ENCODE measurements at regions of chr9 and their contacts with region 1.

Region 1: GRCh38 chr9:117046666-117047327 is 359.7 kb downstream of the TRIM32 start:
- DNase-seq: no peak
- H3K4me3 ChIP-seq: no peak overlapping the region
- H3K27ac ChIP-seq: no peak overlapping the region
- H3K4me1 ChIP-seq: peaks cover 2 to 6% (median 4%) of the 10 kb centered on the region in 4 experiments; a peak in 4 of 7 replicates
- H3K27me3 ChIP-seq: no peaks in the 10 kb centered on the region
- CTCF ChIP-seq: peak in 2 of 3 experiments; percentile 21 to 49; a peak in 2 of 4 replicates
- EP300 ChIP-seq: no peak
- POLR2A ChIP-seq: no peak
- RAD21 ChIP-seq: peak; percentile 68 to 71

Region 2: GRCh38 chr9:116998305-116998704 is 48.5 kb before region 1 on chr9:
- CTCF ChIA-PET with region 1: no interaction called
- POLR2A ChIA-PET with region 1: no interaction called
- DNase-seq: no peak
- H3K4me3 ChIP-seq: no peak overlapping the region
- H3K27ac ChIP-seq: no peak overlapping the region
- H3K4me1 ChIP-seq: no peaks in the 10 kb centered on the region
- H3K27me3 ChIP-seq: no peaks in the 10 kb centered on the region
- CTCF ChIP-seq: no peak
- EP300 ChIP-seq: no peak
- POLR2A ChIP-seq: no peak
- RAD21 ChIP-seq: no peak

Region 3: DNA sequence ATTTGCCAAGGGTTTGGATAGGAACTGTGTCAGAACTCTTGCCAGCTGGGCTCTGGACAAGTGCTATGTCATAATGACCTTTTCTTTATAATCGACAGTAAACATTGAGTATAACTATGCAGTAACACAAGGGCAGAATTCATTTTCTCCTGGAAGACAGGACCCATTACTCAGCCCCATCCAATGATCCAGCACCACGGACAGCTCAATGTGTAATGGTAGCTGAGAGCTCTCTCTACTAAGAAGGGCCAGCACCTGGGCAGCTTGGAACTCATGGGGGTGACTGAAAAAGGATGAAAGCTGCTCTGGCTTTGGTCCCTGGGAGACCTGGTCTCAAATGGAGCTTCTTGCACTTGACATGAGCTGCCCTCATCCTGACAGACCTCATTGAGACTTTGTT is 11.9 kb before region 1 on chr9:
- CTCF ChIA-PET with region 1: interaction called, 11 read pairs
- POLR2A ChIA-PET with region 1: no interaction called
- DNase-seq: peak in 1 of 2 experiments; percentile 74
- H3K4me3 ChIP-seq: no peak overlapping the region
- H3K27ac ChIP-seq: no peak overlapping the region
- H3K4me1 ChIP-seq: no peaks in the 10 kb centered on the region
- H3K27me3 ChIP-seq: no peaks in the 10 kb centered on the region
- CTCF ChIP-seq: no peak
- EP300 ChIP-seq: no peak
- POLR2A ChIP-seq: no peak
- RAD21 ChIP-seq: no peak; a peak in 1 of 4 replicates

Region 4: DNA sequence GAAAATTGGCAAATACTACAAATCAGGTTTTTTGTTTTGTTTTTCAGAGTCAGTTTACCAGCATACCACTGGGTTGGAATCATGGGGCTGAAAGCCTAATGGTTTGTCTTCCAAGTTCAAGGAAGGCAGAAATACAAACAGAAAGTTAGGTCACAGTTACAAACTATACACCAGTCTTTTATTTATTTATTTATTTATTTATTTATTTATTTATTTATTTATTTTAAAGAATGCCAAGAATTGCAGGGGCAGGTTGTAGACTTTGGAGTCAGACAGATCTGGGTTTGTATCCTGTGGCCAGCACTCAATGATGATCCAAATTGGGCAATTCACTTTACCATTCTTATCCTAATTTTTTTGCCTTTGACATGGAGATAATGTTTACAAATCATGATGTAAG is 14.2 kb after region 1 on chr9:
- CTCF ChIA-PET with region 1: interaction called, 24 read pairs
- POLR2A ChIA-PET with region 1: no interaction called
- DNase-seq: no peak
- H3K4me3 ChIP-seq: no peak overlapping the region
- H3K27ac ChIP-seq: no peak overlapping the region
- H3K4me1 ChIP-seq: no peaks in the 10 kb centered on the region
- H3K27me3 ChIP-seq: no peaks in the 10 kb centered on the region
- CTCF ChIP-seq: no peak
- EP300 ChIP-seq: no peak
- POLR2A ChIP-seq: no peak
- RAD21 ChIP-seq: no peak

Measured in H1 (cell line).